BJ (cell line): ENCODE measurements at regions of chr11 and their contacts with region 1.

Region 1: DNA sequence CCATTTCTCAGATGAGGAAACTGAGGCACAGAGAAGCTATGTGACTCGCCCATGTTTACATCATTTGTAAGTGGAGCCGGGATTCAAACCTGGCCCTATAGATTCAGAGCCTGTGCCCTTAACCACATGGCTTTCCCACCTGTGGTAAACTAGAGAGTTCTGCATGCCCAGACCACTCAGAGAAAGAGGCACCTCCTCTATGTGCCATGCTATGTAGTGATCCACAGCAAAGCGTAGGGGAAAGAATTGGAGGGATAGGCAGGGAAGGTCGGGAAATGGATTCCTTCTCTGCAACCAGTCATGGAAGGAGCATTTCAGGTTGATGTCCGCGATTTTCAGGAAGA is 15.4 kb upstream of the POU2AF2 start:
- DNase-seq: no peak
- H3K4me3 ChIP-seq: no peak overlapping the region
- H3K27me3 ChIP-seq: no peaks in the 10 kb centered on the region
- CTCF ChIP-seq: no peak

Region 2: GRCh38 chr11:110463153-110463552 is 766.9 kb before region 1 on chr11:
- CTCF ChIA-PET with region 1: interaction called, 33 read pairs
- POLR2A ChIA-PET with region 1: no interaction called
- DNase-seq: no peak
- H3K4me3 ChIP-seq: no peak overlapping the region
- H3K27me3 ChIP-seq: no peaks in the 10 kb centered on the region
- CTCF ChIP-seq: peak; percentile 64

Region 3: GRCh38 chr11:111206472-111206871 is 23.6 kb before region 1 on chr11:
- CTCF ChIA-PET with region 1: no interaction called
- POLR2A ChIA-PET with region 1: no interaction called
- DNase-seq: peak; percentile 36
- H3K4me3 ChIP-seq: no peak overlapping the region
- H3K27me3 ChIP-seq: no peaks in the 10 kb centered on the region
- CTCF ChIP-seq: no peak